ENCODE measurements at regions of chr4 and their contacts with region 1.

Region 1: GRCh38 chr4:143482840-143483239 is 30.7 kb upstream of the SMARCA5 start:
- DNase-seq: no peak
- ATAC-seq: peak; percentile 83
- H3K4me3 ChIP-seq: no peak overlapping the region
- H3K27ac ChIP-seq: no peak overlapping the region
- H3K4me1 ChIP-seq: no peaks in the 10 kb centered on the region
- H3K27me3 ChIP-seq: no peaks in the 10 kb centered on the region; a peak in 1 of 4 replicates
- CTCF ChIP-seq: peak; percentile 38 to 74 (median 42); a peak in 4 of 6 replicates
- EP300 ChIP-seq: no peak
- POLR2A ChIP-seq: no peak
- RAD21 ChIP-seq: peak; percentile 94

Region 2: GRCh38 chr4:142984871-142985585 is 497.8 kb before region 1 on chr4:
- CTCF ChIA-PET with region 1: interaction called, 6 read pairs
- POLR2A ChIA-PET with region 1: no interaction called
- RAD21 ChIA-PET with region 1: no interaction called
- SMC1A ChIA-PET with region 1: no interaction called
- in situ Hi-C with region 1: no loop called
- intact Hi-C with region 1: loop called (anchors 5 kb)
- DNase-seq: no peak
- ATAC-seq: 0 out of 3 replicates have a peak, but pooled peaks have one; percentile 44
- H3K4me3 ChIP-seq: no peak overlapping the region
- H3K27ac ChIP-seq: no peak overlapping the region
- H3K4me1 ChIP-seq: no peaks in the 10 kb centered on the region
- H3K27me3 ChIP-seq: no peaks in the 10 kb centered on the region
- CTCF ChIP-seq: peak in 2 of 3 experiments; percentile 13 to 29; a peak in 2 of 6 replicates
- EP300 ChIP-seq: no peak
- POLR2A ChIP-seq: no peak
- RAD21 ChIP-seq: peak; percentile 47

Region 3: GRCh38 chr4:143207557-143207956 is 275.3 kb before region 1 on chr4:
- CTCF ChIA-PET with region 1: interaction called, 6 read pairs
- POLR2A ChIA-PET with region 1: no interaction called
- RAD21 ChIA-PET with region 1: interaction called, 4 read pairs
- SMC1A ChIA-PET with region 1: interaction called, 6 read pairs
- in situ Hi-C with region 1: loop called (anchors 5 kb)
- intact Hi-C with region 1: loop called (anchors 2 kb)
- DNase-seq: no peak
- ATAC-seq: peak; percentile 48; the same call in 2 of the 3 replicates
- H3K4me3 ChIP-seq: no peak overlapping the region
- H3K27ac ChIP-seq: no peak overlapping the region
- H3K4me1 ChIP-seq: no peaks in the 10 kb centered on the region
- H3K27me3 ChIP-seq: no peaks in the 10 kb centered on the region
- CTCF ChIP-seq: peak in 2 of 3 experiments; percentile 7 to 14; a peak in 1 of 6 replicates
- EP300 ChIP-seq: no peak
- POLR2A ChIP-seq: no peak
- RAD21 ChIP-seq: peak; percentile 28; the same call in 1 of the 2 replicates

Region 4: DNA sequence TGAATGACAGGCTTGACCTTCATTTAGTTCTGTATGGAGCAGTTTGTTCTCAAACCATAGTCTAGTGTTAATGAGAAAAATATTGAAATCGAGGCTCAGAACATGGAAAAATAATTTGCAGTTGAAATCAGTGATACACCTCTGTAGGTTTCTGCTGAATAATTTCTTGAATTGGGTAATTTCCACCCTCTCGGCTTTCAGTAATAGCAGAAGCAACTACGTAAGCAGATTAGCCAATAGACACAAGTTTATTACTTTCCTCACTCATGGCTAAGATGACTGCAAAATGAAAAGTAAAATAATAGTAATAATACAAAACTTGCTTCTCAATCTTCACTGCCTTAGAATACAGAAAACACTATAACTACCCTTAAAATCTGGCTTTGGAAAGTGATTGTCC is 252.2 kb before region 1 on chr4:
- CTCF ChIA-PET with region 1: no interaction called
- POLR2A ChIA-PET with region 1: no interaction called
- RAD21 ChIA-PET with region 1: no interaction called
- SMC1A ChIA-PET with region 1: no interaction called
- in situ Hi-C with region 1: no loop called
- intact Hi-C with region 1: no loop called
- DNase-seq: no peak
- ATAC-seq: peak; percentile 84
- H3K4me3 ChIP-seq: no peak overlapping the region
- H3K27ac ChIP-seq: no peak overlapping the region
- H3K4me1 ChIP-seq: no peaks in the 10 kb centered on the region
- H3K27me3 ChIP-seq: no peaks in the 10 kb centered on the region
- CTCF ChIP-seq: no peak
- EP300 ChIP-seq: no peak
- POLR2A ChIP-seq: no peak
- RAD21 ChIP-seq: no peak

Region 5: DNA sequence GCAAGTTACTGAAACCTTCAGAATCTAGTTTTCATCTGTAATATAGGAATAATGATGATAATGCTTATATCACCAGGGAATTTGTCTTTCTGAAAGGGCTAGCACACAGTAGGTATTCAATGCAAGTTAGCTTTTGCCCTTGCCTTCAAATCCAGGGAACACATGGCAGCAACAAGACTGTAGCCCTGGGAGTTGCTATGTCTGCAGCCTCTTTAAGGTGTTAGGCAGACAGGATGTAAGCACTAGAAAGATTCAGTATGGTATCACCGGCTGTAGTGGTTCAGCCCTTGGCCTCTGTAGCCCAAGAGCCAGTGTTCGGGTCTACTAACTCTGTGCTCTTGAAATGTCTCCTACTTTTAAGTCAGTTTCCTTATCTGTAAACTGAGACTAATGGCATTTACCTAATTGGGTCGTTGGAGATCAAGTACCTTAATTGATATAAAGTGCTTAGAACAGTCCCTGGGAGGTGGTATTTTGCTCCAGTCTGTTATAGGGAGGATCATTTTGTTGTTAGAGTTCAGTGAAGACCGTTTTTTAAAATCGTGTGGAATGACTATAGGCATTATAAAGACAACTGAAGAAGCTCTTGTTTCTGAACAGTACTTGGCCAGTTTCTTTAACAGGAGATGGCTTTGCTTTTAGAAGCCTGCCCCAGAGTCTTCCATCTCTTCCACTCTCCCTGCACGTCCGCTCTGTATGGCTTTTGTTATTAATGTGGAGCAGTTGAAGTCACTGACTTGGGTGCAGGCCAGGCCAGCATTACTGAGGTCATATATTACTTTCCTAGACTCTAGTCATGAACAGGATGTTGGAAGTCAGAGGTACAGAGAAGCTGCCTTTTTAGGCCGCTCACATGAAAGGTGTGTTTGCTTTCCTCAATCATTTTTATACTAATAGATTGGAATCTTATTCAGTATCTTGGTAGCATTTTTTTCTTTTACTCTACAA is 101.4 kb before region 1 on chr4:
- CTCF ChIA-PET with region 1: interaction called, 31 read pairs
- POLR2A ChIA-PET with region 1: interaction called, 4 read pairs
- RAD21 ChIA-PET with region 1: interaction called, 101 read pairs
- SMC1A ChIA-PET with region 1: interaction called, 116 read pairs
- in situ Hi-C with region 1: no loop called
- intact Hi-C with region 1: no loop called
- DNase-seq: no peak
- ATAC-seq: peak; percentile 67
- H3K4me3 ChIP-seq: no peak overlapping the region
- H3K27ac ChIP-seq: no peak overlapping the region
- H3K4me1 ChIP-seq: peaks cover 33% of the 10 kb centered on the region
- H3K27me3 ChIP-seq: no peaks in the 10 kb centered on the region
- CTCF ChIP-seq: no peak
- EP300 ChIP-seq: no peak
- POLR2A ChIP-seq: no peak
- RAD21 ChIP-seq: no peak

Region 6: DNA sequence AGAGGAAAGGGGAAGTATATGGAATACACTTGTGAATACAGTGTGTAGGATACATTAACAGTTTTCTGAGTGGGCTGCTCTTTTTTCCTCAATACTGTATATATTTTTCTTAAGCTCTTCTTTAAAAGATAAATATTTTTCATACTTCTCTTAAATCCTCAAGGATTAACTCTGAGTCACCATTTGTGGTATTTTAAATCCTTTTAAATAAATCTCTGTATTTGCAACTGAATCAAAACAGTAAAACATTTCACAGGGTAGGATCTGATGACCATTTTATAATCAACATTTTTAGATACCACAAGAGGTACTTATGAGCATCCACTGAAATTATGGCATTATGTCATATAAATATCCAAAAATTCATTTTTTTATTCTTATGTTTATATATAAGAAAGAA is 58.6 kb before region 1 on chr4:
- CTCF ChIA-PET with region 1: no interaction called
- POLR2A ChIA-PET with region 1: interaction called, 10 read pairs
- RAD21 ChIA-PET with region 1: no interaction called
- SMC1A ChIA-PET with region 1: interaction called, 18 read pairs
- in situ Hi-C with region 1: no loop called
- intact Hi-C with region 1: no loop called
- DNase-seq: no peak
- ATAC-seq: no peak
- H3K4me3 ChIP-seq: no peak overlapping the region
- H3K27ac ChIP-seq: no peak overlapping the region
- H3K4me1 ChIP-seq: no peaks in the 10 kb centered on the region
- H3K27me3 ChIP-seq: no peaks in the 10 kb centered on the region
- CTCF ChIP-seq: no peak
- EP300 ChIP-seq: no peak
- POLR2A ChIP-seq: no peak
- RAD21 ChIP-seq: no peak

Region 7: GRCh38 chr4:143502231-143502630 is 19.4 kb after region 1 on chr4:
- CTCF ChIA-PET with region 1: no interaction called
- POLR2A ChIA-PET with region 1: no interaction called
- RAD21 ChIA-PET with region 1: no interaction called
- SMC1A ChIA-PET with region 1: no interaction called
- in situ Hi-C with region 1: no loop called
- intact Hi-C with region 1: no loop called
- DNase-seq: no peak
- ATAC-seq: no peak
- H3K4me3 ChIP-seq: no peak overlapping the region
- H3K27ac ChIP-seq: no peak overlapping the region
- H3K4me1 ChIP-seq: no peaks in the 10 kb centered on the region
- H3K27me3 ChIP-seq: no peaks in the 10 kb centered on the region
- CTCF ChIP-seq: no peak
- EP300 ChIP-seq: no peak
- POLR2A ChIP-seq: no peak
- RAD21 ChIP-seq: no peak

Region 8: DNA sequence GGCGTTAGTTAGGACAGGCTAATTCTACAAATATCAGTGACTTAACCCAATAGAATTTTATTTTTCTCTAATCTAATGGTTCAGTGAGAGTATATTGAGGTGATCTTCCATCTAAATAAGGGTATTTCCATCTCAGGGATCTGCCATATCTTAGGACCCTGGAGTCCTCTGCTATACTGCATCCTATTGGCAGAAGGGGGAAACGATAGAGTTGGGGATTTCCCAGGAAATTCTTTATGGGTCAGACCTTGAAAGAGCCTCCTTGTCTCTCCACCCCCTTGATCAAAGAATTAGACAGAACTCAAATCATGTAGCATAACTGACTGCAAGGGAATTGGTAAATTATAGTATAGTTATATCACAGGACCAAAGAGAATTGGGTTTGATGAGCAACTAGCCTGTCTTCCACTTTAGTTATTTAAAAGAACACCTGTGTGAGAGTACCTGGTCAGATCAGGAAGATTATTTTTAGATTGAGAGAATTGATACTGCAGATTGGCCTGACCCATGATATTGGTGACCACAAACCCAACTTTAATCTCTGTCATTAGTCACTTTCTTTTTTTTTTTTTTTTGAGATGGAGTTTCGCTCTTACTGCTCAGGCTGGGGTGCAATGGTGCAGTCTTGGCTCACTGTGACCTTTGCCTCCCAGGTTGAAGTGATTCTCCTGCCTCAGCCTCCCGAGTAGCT is 56.3 kb after region 1 on chr4:
- CTCF ChIA-PET with region 1: no interaction called
- POLR2A ChIA-PET with region 1: no interaction called
- RAD21 ChIA-PET with region 1: no interaction called
- SMC1A ChIA-PET with region 1: no interaction called
- in situ Hi-C with region 1: no loop called
- intact Hi-C with region 1: no loop called
- DNase-seq: no peak
- ATAC-seq: peak; percentile 54
- H3K4me3 ChIP-seq: no peak overlapping the region
- H3K27ac ChIP-seq: no peak overlapping the region
- H3K4me1 ChIP-seq: peaks cover 3% of the 10 kb centered on the region; the same call in 1 of the 2 replicates
- H3K27me3 ChIP-seq: no peaks in the 10 kb centered on the region
- CTCF ChIP-seq: no peak
- EP300 ChIP-seq: no peak
- POLR2A ChIP-seq: no peak
- RAD21 ChIP-seq: no peak